PC-9 (cell line): ENCODE measurements at regions of chr5 and their contacts with region 1.

Region 1: GRCh38 chr5:10452768-10453331 is 11.2 kb downstream of the ROPN1L start:
- DNase-seq: peak; percentile 62 to 77
- H3K4me3 ChIP-seq: no peak overlapping the region
- H3K27ac ChIP-seq: peak overlapping the region; percentile 72
- H3K4me1 ChIP-seq: peaks cover 43% of the 10 kb centered on the region
- H3K27me3 ChIP-seq: no peaks in the 10 kb centered on the region
- CTCF ChIP-seq: peak; percentile 95

Region 2: DNA sequence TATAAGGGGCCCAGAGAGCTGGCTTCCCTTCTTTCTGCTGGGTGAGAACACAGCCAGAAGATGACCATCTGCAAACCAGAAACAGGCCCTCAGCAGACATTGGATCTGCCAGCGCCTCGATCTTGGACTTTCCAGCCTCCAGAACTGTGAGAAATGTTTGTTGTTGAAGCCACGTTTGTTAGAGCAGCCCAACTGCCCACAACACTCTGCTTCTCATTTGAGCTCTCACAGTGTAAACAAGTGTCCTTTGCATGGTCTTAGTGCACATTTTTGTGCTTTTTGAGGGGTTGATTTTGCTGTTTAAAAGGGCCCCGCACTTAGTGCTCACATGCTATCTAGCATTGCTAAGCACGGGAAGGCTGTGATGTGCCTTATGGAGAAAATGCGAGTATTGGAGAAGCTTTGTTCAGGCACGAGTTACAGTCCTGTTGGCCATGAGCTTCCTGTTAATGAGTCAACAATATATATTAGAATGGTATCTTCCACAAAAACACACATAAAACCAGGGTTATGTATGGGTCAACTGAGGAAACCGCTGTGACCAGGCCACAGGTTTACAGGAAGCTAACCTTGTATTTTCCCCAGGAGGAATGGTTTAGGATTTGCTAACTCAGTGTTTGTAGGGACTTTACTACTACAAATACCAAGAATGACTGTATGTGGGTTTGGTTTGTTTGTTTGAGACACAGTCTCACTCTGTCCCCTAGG is 157.1 kb before region 1 on chr5:
- CTCF ChIA-PET with region 1: no interaction called
- POLR2A ChIA-PET with region 1: no interaction called
- intact Hi-C with region 1: no loop called
- DNase-seq: peak in 1 of 2 experiments; percentile 73
- H3K4me3 ChIP-seq: no peak overlapping the region
- H3K27ac ChIP-seq: peak overlapping the region; percentile 55
- H3K4me1 ChIP-seq: peaks cover 7% of the 10 kb centered on the region; the same call in 1 of the 2 replicates
- H3K27me3 ChIP-seq: no peaks in the 10 kb centered on the region
- CTCF ChIP-seq: no peak

Region 3: DNA sequence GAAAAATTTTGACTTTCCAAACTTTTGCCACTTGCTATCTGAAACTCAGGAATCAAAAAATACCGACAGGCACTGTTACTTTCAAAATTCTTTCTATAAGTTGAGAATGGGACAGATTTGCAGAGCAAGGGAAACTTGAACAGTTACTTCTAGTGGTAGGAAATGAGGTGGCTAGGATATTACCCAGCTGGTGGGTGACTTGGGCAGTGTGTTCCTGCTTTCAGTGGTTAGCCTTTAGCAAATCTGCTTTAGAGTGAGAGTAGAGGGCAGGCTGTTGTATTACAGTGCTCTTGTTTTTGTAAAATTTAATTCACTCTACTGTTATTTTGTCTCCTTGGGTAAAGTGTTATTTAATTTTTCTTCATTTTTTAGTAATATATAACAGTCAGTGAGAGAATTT is 51.4 kb before region 1 on chr5:
- CTCF ChIA-PET with region 1: no interaction called
- POLR2A ChIA-PET with region 1: no interaction called
- intact Hi-C with region 1: no loop called
- DNase-seq: no peak
- H3K4me3 ChIP-seq: no peak overlapping the region
- H3K27ac ChIP-seq: no peak overlapping the region
- H3K4me1 ChIP-seq: no peaks in the 10 kb centered on the region
- H3K27me3 ChIP-seq: no peaks in the 10 kb centered on the region
- CTCF ChIP-seq: no peak

Region 4: GRCh38 chr5:10528056-10528816 is 75.4 kb after region 1 on chr5:
- CTCF ChIA-PET with region 1: no interaction called
- POLR2A ChIA-PET with region 1: no interaction called
- intact Hi-C with region 1: loop called (anchors 1 kb)
- DNase-seq: peak in 1 of 2 experiments; percentile 57
- H3K4me3 ChIP-seq: no peak overlapping the region
- H3K27ac ChIP-seq: no peak overlapping the region
- H3K4me1 ChIP-seq: peaks cover 36% of the 10 kb centered on the region
- H3K27me3 ChIP-seq: no peaks in the 10 kb centered on the region
- CTCF ChIP-seq: 0 out of 2 replicates have a peak, but pooled peaks have one; percentile 14

Region 5: DNA sequence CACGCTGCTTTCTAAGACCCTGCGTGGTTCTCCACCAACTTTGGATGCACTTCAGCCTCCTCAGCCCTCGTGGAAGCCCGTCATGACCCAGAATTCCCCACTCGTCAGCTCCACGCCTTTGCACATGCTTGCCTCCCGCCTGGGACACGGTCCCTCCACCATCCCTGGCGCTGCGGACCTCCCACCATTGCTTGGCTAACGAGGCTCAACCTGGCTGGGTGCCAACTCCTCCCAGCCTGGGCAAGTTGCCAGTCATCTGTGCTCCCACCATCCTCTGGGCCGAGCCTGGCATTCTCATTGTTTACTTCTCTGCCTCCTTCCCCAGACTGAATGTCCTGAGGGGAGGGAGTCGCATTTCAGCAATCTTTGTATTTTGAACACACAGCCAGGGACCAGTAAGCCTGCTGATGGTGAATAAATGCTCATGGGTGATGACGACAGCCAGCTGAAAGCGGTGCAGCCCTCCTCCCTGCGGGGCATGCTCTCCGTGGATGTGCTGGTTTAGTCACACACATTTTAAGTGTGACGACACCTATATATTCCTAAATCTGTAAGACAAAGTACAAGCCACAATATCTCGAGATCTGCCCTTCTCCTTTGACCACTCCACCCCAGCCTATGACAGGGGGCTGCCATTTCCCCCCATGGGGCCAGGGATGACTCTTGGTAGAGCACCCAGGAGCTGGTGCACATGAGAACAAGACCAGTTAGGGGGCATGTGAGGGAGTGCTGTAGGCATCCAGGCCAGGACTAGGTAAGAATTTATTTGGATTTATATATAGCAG is 148.6 kb after region 1 on chr5:
- CTCF ChIA-PET with region 1: interaction called, 5 read pairs
- POLR2A ChIA-PET with region 1: interaction called, 3 read pairs
- intact Hi-C with region 1: loop called (anchors 1 kb)
- DNase-seq: peak; percentile 93 to 99
- H3K4me3 ChIP-seq: peak overlapping the region; percentile 4; the same call in 1 of the 2 replicates
- H3K27ac ChIP-seq: peak overlapping the region; percentile 46
- H3K4me1 ChIP-seq: peaks cover 41% of the 10 kb centered on the region
- H3K27me3 ChIP-seq: no peaks in the 10 kb centered on the region
- CTCF ChIP-seq: no peak

Region 6: DNA sequence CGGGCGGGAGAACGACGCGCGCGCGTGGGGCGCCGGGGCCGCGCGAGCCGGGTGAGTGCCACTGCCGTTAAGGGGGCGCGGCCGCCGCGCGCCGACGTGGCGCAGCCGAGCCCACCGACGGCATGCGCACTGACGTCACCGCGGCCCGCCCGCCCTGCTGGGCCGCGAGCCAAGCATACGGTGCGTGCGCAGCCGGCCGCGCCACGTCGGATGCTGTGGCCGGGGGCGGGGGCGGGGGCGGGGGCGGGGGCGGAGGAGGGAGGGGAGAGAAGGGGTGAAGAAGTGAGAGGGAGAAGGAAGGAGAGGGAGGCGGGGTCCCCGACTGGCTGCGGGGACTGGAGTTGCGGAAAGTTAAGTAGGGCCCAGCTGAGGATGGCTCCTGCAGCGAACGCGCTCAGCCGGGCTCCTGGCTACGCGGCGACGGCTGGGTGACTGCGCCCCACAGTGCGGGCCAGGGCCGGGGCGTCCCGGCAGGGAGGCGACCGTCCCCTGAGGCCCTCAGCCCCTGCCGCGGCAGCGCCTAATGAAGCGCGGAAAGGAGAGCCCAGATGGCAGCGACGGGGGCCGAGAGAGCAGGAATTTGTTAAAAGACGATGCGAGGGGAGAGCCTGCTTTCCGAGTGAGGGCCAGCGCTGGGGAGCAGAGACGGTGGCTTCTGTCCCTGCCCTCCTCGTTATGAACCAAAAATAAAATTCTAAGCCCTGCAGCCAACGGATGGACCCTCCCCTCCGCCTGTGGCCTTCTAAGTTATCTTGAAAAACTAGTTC is 308.5 kb after region 1 on chr5 and contains the start of gene DAP:
- CTCF ChIA-PET with region 1: no interaction called
- POLR2A ChIA-PET with region 1: interaction called, 9 read pairs
- intact Hi-C with region 1: loop called (anchors 1 kb)
- DNase-seq: peak; percentile 60 to 99
- H3K4me3 ChIP-seq: peak within 1 kb of the TSS; percentile 85
- H3K27ac ChIP-seq: peak within 1 kb of the TSS; percentile 80
- H3K4me1 ChIP-seq: peaks cover 36% of the 10 kb centered on the region
- H3K27me3 ChIP-seq: no peaks in the 10 kb centered on the region
- CTCF ChIP-seq: no peak
- total RNA-seq, gene DAP: 256 and 279 TPM in 2 replicates

Region 7: DNA sequence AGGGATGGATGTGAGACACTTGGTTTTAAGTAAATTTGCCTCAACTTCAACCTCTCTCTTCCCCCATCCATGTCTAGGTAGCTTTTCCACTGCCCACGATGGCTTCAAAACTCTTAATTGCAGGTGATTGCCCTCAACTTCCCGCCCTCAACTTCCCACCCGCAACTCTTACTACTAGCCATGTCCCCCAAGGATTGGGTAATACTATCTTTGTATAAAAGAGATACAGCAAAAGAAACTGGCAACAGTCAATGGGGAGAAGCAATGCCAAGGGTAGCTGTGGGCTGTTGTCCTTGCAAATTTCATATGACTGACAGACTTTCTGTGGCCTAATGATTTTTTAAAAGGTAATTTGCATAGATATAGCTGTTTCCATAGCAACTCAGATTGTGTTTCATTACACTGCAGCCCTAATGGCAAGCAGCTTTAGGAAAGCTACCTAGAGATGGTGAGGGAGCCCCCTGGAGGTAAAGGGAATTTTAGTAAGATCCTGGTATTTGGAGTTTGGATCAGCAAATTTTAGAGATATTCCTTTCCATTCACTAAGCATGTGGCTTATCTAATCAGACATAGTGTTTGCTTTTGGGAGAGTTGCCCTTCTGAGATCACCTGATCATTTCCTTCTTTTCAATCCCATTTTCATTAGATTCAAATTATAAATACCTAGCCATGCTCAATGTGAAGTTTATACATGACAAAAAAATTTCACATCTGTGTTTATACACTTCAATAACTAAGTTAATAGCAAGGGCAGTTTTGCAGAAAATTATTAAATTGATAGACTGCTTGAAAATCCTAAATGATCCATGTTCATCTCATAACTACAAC is 729.8 kb after region 1 on chr5:
- CTCF ChIA-PET with region 1: no interaction called
- POLR2A ChIA-PET with region 1: no interaction called
- intact Hi-C with region 1: loop called (anchors 2 kb)
- DNase-seq: peak; percentile 19 to 34
- H3K4me3 ChIP-seq: no peak overlapping the region
- H3K27ac ChIP-seq: no peak overlapping the region
- H3K4me1 ChIP-seq: no peaks in the 10 kb centered on the region
- H3K27me3 ChIP-seq: peaks cover 33% of the 10 kb centered on the region
- CTCF ChIP-seq: peak; percentile 71

Region 8: GRCh38 chr5:11619339-11620024 is 1166.6 kb after region 1 on chr5:
- CTCF ChIA-PET with region 1: no interaction called
- POLR2A ChIA-PET with region 1: no interaction called
- intact Hi-C with region 1: loop called (anchors 2 kb)
- DNase-seq: no peak
- H3K4me3 ChIP-seq: no peak overlapping the region
- H3K27ac ChIP-seq: no peak overlapping the region
- H3K4me1 ChIP-seq: no peaks in the 10 kb centered on the region
- H3K27me3 ChIP-seq: no peaks in the 10 kb centered on the region
- CTCF ChIP-seq: peak; percentile 37; the same call in 1 of the 2 replicates